ENCODE measurements at regions of chr12 and their contacts with region 1.

Region 1: DNA sequence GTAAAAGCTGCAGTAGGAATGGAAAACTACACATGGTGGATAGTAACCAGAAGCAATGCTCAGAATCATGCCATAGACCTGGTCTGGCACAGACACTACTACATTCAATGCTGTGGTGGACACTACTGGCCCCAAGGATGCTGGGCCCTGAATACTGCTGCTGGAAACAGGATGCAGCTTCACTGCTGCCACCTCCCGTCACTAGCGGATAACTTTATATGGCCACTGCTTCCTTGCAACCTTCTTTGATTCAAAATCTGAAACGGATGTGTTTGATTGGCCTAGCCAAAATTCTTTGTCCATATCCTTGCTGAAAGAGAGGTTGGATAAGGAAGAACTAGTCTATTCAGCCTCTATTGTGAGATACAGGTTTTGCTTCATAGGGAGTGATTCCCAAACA is 30.7 kb downstream of the ADCY6 start:
- DNase-seq: no peak
- ATAC-seq: no peak
- H3K4me3 ChIP-seq: no peak overlapping the region
- H3K27ac ChIP-seq: no peak overlapping the region
- H3K4me1 ChIP-seq: peaks cover 0 to 4% (median 0%) of the 10 kb centered on the region in 12 donors
- H3K27me3 ChIP-seq: no peaks in the 10 kb centered on the region
- CTCF ChIP-seq: peak in 1 of 12 donors; percentile 18
- POLR2A ChIP-seq: no peak

Region 2: DNA sequence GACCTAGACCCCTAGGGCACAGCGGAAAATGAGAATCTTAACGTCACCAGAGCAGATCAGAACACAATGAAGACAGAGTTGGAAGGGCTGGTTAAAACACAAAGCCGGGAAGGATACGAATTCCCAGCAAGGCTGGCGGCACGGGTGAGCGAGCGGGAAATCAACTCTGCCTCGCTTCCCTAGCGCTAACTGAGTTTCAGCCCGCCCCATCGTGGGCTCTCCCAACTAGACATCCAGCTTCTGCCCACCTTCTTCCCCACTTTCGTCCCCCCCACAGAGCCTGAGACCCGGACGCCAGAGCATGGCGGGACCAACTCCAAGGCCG is 42.1 kb before region 1 on chr12:
- intact Hi-C with region 1: no loop called
- DNase-seq: no peak
- ATAC-seq: no peak
- H3K4me3 ChIP-seq: peak overlapping the region; percentile 64 to 85 (median 76)
- H3K27ac ChIP-seq: peak overlapping the region; percentile 78 to 97 (median 94)
- H3K4me1 ChIP-seq: peaks cover 11 to 36% (median 27%) of the 10 kb centered on the region in 12 donors
- H3K27me3 ChIP-seq: no peaks in the 10 kb centered on the region
- CTCF ChIP-seq: no peak
- POLR2A ChIP-seq: no peak

Region 3: DNA sequence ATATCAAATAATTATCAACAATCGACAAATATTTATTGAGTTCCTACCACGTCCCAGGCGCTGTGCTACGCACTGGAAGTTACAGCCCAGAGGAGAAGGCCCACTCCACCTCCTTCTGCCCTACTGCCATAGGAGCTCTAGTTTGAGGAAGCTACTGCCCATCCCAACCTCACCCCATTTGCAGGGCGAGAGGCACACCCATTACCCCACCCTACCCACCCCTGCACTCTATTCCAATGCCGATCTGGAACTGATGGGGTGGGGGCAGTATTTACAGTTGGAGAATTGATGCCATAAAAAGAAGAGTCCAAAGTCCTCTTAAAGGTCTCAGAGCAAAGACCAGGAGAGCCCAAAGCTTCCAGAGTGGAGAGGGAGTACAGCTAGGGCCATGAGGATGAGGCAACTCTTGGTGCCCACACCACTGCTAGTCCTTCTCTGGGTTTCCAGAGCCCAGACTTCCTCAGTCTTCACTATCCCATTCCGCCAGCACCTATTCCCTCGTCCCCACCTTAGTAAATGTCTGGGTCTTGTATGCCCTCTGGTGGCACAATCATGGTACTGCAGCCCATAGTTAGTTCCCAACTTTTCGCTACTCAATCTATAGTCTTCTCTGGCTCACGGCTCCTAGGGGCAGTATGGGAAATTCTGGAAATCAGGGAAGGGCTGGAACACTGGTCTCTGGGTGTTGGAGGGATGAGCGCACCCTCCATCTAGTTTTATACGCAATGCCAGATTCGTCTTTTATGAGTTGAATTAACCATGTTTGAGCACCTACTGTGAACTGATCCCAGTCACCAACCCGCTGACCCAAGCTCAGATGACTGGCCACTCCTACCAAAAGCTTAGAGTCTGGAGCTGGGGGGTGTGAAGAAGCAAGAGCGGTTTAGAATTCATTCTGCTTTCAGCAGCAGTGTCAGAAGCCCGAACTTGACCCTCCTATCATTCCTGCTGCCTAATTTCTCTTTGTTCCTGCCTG is 37.5 kb after region 1 on chr12:
- intact Hi-C with region 1: loop called (anchors 1 to 2 kb)
- DNase-seq: peak in 3 of 5 donors; percentile 53 to 64 (median 63)
- ATAC-seq: peak; percentile 82 to 90 (median 90)
- H3K4me3 ChIP-seq: no peak overlapping the region
- H3K27ac ChIP-seq: no peak overlapping the region
- H3K4me1 ChIP-seq: peaks cover 0 to 7% (median 1%) of the 10 kb centered on the region in 12 donors
- H3K27me3 ChIP-seq: peaks cover 0 to 9% (median 0%) of the 10 kb centered on the region in 9 donors
- CTCF ChIP-seq: peak; percentile 85 to 97 (median 95)
- POLR2A ChIP-seq: no peak

Region 4: DNA sequence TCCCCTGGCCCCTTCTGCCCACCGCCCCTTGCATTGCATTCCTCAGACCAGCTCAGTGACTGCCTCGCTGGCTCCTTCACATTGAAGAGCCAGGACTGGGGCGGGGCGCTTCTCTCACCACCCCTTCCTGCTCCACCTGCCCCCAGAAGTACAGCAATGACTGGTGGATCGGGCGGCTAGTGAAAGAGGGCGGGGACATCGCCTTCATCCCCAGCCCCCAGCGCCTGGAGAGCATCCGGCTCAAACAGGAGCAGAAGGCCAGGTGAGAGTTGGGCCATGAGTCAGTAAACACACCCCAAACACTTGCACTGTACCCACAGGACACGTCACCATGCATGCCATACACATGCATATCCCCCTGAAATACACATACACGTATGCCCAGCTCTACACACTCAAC is 65.9 kb after region 1 on chr12:
- intact Hi-C with region 1: no loop called
- DNase-seq: no peak
- ATAC-seq: no peak
- H3K4me3 ChIP-seq: no peak overlapping the region
- H3K27ac ChIP-seq: no peak overlapping the region
- H3K4me1 ChIP-seq: peaks cover 0 to 4% (median 0%) of the 10 kb centered on the region in 12 donors
- H3K27me3 ChIP-seq: no peaks in the 10 kb centered on the region
- CTCF ChIP-seq: no peak
- POLR2A ChIP-seq: no peak